ENCODE measurements at regions of chr2 and their contacts with region 1.

Region 1: DNA sequence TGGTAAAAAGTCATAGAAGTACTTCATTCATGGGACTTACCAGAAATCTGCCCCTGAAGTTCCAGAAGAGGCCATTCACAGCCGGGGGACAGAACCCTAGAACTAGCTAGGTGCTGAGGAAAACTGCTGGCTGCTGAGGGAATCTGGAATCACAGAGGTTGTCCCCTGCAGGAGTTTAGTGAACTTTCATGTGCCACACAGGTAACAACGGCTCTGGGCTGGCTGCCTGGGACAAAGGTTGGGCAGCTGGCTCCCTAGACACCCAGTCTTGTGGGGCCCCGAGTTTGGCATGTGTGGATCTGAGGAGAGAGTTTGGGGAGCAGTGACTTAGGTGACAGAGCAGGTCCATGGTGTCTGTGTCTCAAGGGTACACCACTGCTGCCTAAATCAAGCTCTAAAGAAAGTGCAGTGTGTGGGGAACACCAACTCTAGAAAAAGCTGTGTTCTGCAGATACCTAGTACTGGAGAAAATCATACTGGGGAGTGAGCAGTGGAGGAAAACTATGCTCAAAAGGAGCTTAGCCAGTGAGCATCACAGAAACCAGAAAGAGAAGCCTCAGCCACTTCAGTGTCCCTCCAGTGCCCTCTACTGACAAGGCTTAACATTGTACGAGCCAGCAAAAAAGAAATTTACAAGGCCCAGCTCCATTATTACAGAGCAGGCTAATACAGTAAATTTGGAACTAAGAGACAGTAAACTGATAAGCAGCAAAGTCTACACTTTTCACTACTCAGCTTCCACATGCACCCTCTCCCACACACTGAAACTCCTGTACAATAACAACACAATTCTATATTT is 15.2 kb downstream of the GALNT3 start:
- DNase-seq: peak; percentile 38
- H3K4me3 ChIP-seq: no peak overlapping the region
- H3K27ac ChIP-seq: no peak overlapping the region
- H3K4me1 ChIP-seq: no peaks in the 10 kb centered on the region
- CTCF ChIP-seq: peak; percentile 72

Region 2: GRCh38 chr2:165401285-165401852 is 377.5 kb before region 1 on chr2:
- CTCF ChIA-PET with region 1: no interaction called
- POLR2A ChIA-PET with region 1: no interaction called
- intact Hi-C with region 1: loop called (anchors 1 kb)
- DNase-seq: peak; percentile 75
- H3K4me3 ChIP-seq: no peak overlapping the region
- H3K27ac ChIP-seq: no peak overlapping the region
- H3K4me1 ChIP-seq: no peaks in the 10 kb centered on the region
- CTCF ChIP-seq: peak; percentile 92

Region 3: DNA sequence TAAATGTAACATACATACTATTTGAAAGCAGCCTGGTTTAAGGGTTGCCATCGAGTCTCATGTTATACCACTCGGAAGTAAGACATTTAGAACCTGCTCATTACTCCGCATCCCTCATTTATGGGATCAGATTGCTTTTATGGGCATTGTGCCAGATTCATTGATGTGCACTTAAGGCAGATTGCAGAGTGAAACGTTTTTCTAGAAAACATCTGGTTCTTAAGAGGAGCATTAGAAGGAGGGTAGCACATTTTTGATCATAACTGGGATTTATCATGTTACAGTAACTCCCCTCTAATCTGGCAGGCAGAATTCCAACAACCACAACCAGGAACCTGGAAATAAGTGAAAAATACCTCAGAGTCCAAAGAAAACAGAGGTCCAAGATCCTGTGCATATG is 89.4 kb after region 1 on chr2:
- CTCF ChIA-PET with region 1: no interaction called
- POLR2A ChIA-PET with region 1: no interaction called
- intact Hi-C with region 1: no loop called
- DNase-seq: no peak
- H3K4me3 ChIP-seq: no peak overlapping the region
- H3K27ac ChIP-seq: no peak overlapping the region
- H3K4me1 ChIP-seq: no peaks in the 10 kb centered on the region
- CTCF ChIP-seq: no peak

Region 4: GRCh38 chr2:166593403-166593802 is 814.6 kb after region 1 on chr2:
- CTCF ChIA-PET with region 1: no interaction called
- POLR2A ChIA-PET with region 1: no interaction called
- intact Hi-C with region 1: no loop called
- DNase-seq: no peak
- H3K4me3 ChIP-seq: no peak overlapping the region
- H3K27ac ChIP-seq: no peak overlapping the region
- H3K4me1 ChIP-seq: no peaks in the 10 kb centered on the region
- CTCF ChIP-seq: no peak